Aorta (tissue), 5 donors: ENCODE measurements at regions of chr5 and their contacts with region 1.

Region 1: GRCh38 chr5:179550511-179551230 is at the start of gene RUFY1:
- DNase-seq: peak; percentile 88 to 93
- ATAC-seq: peak; percentile 92
- H3K4me3 ChIP-seq: peak within 1 kb of the TSS; percentile 68 to 74
- H3K27ac ChIP-seq: peak within 1 kb of the TSS; percentile 77 to 96
- H3K4me1 ChIP-seq: peaks cover 0 to 3% of the 10 kb centered on the region in 2 donors
- H3K27me3 ChIP-seq: no peaks in the 10 kb centered on the region
- total RNA-seq, gene RUFY1: 35.4 to 51.9 TPM

Region 2: GRCh38 chr5:179495906-179496455 is 54.7 kb before region 1 on chr5:
- intact Hi-C with region 1: no loop called
- DNase-seq: peak in 1 of 2 donors; percentile 28
- ATAC-seq: no peak
- H3K4me3 ChIP-seq: no peak overlapping the region
- H3K27ac ChIP-seq: no peak overlapping the region
- H3K4me1 ChIP-seq: no peaks in the 10 kb centered on the region
- H3K27me3 ChIP-seq: no peaks in the 10 kb centered on the region

Region 3: GRCh38 chr5:179623003-179623880 is 72.6 kb after region 1 on chr5 and contains the start of gene HNRNPH1:
- intact Hi-C with region 1: loop called in 1 of 2 experiments (anchors 5 kb)
- DNase-seq: peak; percentile 99
- ATAC-seq: peak; percentile 95
- H3K4me3 ChIP-seq: peak within 1 kb of the TSS; percentile 91 to 95
- H3K27ac ChIP-seq: peak within 1 kb of the TSS; percentile 99 to 100
- H3K4me1 ChIP-seq: no peaks in the 10 kb centered on the region
- H3K27me3 ChIP-seq: no peaks in the 10 kb centered on the region
- total RNA-seq, gene HNRNPH1: 523 to 680 TPM